ENCODE measurements at regions of chr11 and their contacts with region 1.

Region 1: DNA sequence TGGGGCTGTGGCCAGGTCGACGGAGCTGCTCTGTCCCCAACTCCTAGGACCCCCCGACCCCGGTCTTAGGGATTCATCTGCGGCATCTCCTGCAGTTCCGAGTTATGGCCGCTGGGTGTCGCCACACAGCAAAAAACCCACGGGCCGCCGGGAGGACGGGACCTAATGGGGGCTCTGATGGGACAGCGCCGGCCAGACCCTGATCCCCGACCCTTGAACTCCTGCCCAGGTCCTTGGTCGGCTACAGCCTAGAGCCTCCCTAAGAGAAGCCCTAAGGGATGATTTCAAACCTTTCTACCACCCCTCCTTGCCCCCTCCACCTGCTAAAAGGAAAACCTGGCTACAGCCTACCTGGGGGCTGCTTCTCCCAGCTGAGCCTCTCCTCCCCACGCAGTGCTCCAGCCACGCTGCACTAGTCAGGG is 30.8 kb upstream of the LRRC10B start:
- DNase-seq: peak; percentile 89
- H3K4me3 ChIP-seq: no peak overlapping the region; a peak in 1 of 4 replicates
- H3K27ac ChIP-seq: no peak overlapping the region
- H3K4me1 ChIP-seq: peaks cover 0 to 12% of the 10 kb centered on the region in 2 experiments; a peak in 1 of 4 replicates
- H3K27me3 ChIP-seq: no peaks in the 10 kb centered on the region
- CTCF ChIP-seq: peak; percentile 92
- EP300 ChIP-seq: no peak
- RAD21 ChIP-seq: peak; percentile 88

Region 2: GRCh38 chr11:61102667-61103571 is 374.8 kb before region 1 on chr11:
- CTCF ChIA-PET with region 1: no interaction called
- POLR2A ChIA-PET with region 1: no interaction called
- DNase-seq: no peak
- H3K4me3 ChIP-seq: no peak overlapping the region
- H3K27ac ChIP-seq: no peak overlapping the region
- H3K4me1 ChIP-seq: no peaks in the 10 kb centered on the region
- H3K27me3 ChIP-seq: no peaks in the 10 kb centered on the region
- CTCF ChIP-seq: no peak
- EP300 ChIP-seq: no peak
- RAD21 ChIP-seq: no peak

Region 3: GRCh38 chr11:61392981-61393595 is 84.7 kb before region 1 on chr11:
- CTCF ChIA-PET with region 1: no interaction called
- POLR2A ChIA-PET with region 1: no interaction called
- DNase-seq: peak; percentile 52
- H3K4me3 ChIP-seq: peak overlapping the region; percentile 63 to 70
- H3K27ac ChIP-seq: no peak overlapping the region
- H3K4me1 ChIP-seq: peaks cover 0 to 6% of the 10 kb centered on the region in 2 experiments; a peak in 2 of 4 replicates
- H3K27me3 ChIP-seq: no peaks in the 10 kb centered on the region
- CTCF ChIP-seq: peak; percentile 28
- EP300 ChIP-seq: no peak
- RAD21 ChIP-seq: peak; percentile 52

Region 4: DNA sequence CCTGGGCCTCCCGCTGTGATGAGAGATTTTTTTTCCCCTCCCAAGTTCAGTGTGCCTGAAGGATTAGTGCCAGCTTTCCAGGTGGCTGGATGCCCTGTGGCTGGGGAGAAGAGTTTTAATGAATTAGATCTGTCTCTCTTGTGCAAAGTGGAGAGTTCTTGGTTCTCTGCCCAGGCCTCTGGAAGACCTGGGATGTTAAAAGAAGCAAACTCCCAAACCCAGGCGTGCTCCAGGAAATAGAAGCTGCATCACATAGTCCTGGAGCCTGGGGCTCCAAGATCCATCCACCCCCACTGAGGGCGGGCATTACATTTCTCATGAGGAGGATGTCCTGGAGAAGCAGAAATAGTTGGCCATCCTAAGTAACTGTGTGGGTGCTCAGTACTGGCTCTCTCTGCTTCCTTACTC is 17.3 kb before region 1 on chr11:
- CTCF ChIA-PET with region 1: interaction called, 20 read pairs
- POLR2A ChIA-PET with region 1: no interaction called
- DNase-seq: no peak
- H3K4me3 ChIP-seq: no peak overlapping the region
- H3K27ac ChIP-seq: peak overlapping the region in 1 of 2 experiments; percentile 29; a peak in 1 of 4 replicates
- H3K4me1 ChIP-seq: peaks cover 3 to 12% of the 10 kb centered on the region in 2 experiments; a peak in 2 of 4 replicates
- H3K27me3 ChIP-seq: no peaks in the 10 kb centered on the region
- CTCF ChIP-seq: no peak
- EP300 ChIP-seq: no peak
- RAD21 ChIP-seq: no peak

Region 5: GRCh38 chr11:61509043-61510029 is 31.6 kb after region 1 on chr11:
- CTCF ChIA-PET with region 1: interaction called, 670 read pairs
- POLR2A ChIA-PET with region 1: no interaction called
- DNase-seq: peak; percentile 92
- H3K4me3 ChIP-seq: peak overlapping the region in 1 of 2 experiments; percentile 29; a peak in 2 of 4 replicates
- H3K27ac ChIP-seq: no peak overlapping the region; a peak in 1 of 4 replicates
- H3K4me1 ChIP-seq: peaks cover 0 to 49% of the 10 kb centered on the region in 2 experiments; a peak in 3 of 4 replicates
- H3K27me3 ChIP-seq: peaks cover 32% of the 10 kb centered on the region
- CTCF ChIP-seq: peak; percentile 36; the same call in 1 of the 2 replicates
- EP300 ChIP-seq: no peak
- RAD21 ChIP-seq: peak; percentile 54

Region 6: DNA sequence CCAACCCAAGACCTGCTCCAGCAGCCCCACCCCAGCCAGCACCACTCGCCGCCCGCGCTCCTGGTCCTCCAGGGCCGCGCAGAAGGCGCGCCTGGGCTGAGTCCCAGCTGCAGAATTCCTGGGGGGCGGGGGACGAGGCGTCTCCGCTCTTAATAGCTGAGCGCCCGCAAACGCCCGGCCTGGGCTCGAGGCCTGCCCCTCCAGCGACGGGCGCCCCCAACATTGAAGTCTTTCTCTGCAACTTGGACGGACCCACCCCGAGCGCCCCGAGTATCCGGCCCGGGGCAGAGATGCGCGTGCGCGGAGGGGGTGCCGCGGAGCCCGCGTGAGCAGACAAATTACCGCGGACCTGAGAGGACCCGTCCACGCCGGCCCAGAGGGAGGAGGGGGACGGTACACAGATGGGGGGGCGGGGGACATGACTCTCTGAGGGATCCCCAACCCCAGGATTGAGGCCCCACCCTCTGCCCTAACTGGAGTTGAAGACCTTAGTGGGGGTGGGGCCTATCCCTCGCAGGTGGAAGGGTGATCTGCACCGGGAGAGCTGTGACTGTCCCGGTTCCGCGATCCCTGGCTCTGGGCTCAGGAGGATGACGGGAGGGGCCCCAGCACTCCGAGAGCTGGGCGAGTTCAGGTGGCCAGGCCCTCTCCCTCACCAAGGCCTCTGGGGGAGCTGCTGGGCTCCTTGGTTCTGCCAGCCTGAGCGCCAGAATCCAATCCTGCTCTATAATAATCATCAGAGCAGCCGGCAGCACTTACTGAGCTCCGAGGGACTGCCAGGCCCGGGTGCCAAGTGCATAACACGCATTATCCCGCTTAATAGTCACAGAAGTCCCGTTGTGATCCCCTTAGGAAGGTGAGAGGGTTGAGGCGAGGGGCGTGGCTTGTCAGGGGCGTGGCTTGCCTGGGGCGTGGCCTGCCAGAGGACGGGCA is 110.0 kb after region 1 on chr11:
- CTCF ChIA-PET with region 1: interaction called, 156 read pairs
- POLR2A ChIA-PET with region 1: no interaction called
- DNase-seq: peak; percentile 69
- H3K4me3 ChIP-seq: no peak overlapping the region
- H3K27ac ChIP-seq: no peak overlapping the region
- H3K4me1 ChIP-seq: peaks cover 0 to 2% of the 10 kb centered on the region in 2 experiments; a peak in 1 of 4 replicates
- H3K27me3 ChIP-seq: peaks cover 23% of the 10 kb centered on the region
- CTCF ChIP-seq: no peak
- EP300 ChIP-seq: no peak
- RAD21 ChIP-seq: no peak

Region 7: DNA sequence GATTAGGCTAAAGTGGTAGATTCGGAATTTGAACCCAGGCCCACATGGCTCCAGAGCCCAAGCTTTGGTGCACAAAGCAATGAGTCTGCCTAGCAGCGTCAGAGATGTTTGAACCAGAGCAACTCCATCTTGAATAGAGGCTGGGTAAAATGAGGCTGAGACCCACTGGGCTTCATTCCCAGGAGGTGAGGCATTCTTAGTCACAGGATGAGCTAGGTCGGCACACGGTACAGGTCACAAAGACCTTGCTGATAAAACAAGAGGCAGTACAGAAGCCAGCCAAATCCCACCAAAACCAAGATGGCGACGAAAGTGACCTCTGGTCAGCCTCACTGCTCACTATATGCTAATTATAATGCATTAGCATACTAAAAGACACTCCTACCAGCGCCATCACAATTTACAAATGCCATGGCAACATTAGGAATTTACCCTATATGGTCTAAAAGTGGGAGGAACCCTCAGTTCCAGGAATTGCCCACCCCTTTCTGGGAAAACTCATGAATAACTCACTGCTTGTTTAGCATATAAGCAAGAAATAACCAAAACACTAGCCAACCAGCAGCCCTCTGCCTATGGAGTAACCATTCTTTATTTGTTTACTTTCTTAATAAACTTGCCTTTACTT is 162.2 kb after region 1 on chr11:
- CTCF ChIA-PET with region 1: interaction called, 46 read pairs
- POLR2A ChIA-PET with region 1: no interaction called
- DNase-seq: no peak
- H3K4me3 ChIP-seq: no peak overlapping the region
- H3K27ac ChIP-seq: no peak overlapping the region
- H3K4me1 ChIP-seq: peaks cover 0 to 2% of the 10 kb centered on the region in 2 experiments; a peak in 1 of 4 replicates
- H3K27me3 ChIP-seq: no peaks in the 10 kb centered on the region; the same call in 1 of the 2 replicates
- CTCF ChIP-seq: no peak
- EP300 ChIP-seq: no peak
- RAD21 ChIP-seq: no peak

Measured in SK-N-SH (cell line).